H1 (cell line): ENCODE measurements at regions of chr6 and their contacts with region 1.

Region 1: DNA sequence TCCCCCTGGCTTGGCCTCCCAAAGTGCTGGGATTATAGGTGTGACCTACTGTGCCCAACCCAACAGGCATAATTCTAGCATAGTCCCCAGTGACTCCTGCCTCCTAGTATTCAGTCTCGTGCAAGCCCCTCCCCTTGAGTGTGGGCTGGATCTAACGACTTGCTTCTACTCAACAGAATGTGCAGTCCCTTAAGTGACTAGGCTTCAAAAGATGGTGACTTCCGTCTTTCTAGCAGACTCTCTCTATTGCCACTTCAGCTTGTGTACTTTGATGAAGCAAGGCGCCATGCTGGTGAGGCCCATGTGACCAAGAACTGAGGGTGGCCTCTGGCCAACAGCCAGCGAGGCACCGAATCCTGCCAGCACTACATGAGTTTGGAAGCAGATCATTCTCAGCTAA is 109.6 kb upstream of the TRAF3IP2 start:
- DNase-seq: no peak
- H3K4me3 ChIP-seq: no peak overlapping the region
- H3K27ac ChIP-seq: no peak overlapping the region
- H3K4me1 ChIP-seq: peaks cover 0 to 6% (median 3%) of the 10 kb centered on the region in 4 experiments; a peak in 5 of 7 replicates
- H3K27me3 ChIP-seq: no peaks in the 10 kb centered on the region
- CTCF ChIP-seq: no peak
- EP300 ChIP-seq: no peak
- POLR2A ChIP-seq: no peak
- RAD21 ChIP-seq: no peak

Region 2: GRCh38 chr6:111727802-111728201 is 12.5 kb after region 1 on chr6:
- CTCF ChIA-PET with region 1: interaction called, 27 read pairs
- POLR2A ChIA-PET with region 1: interaction called, 3 read pairs
- DNase-seq: no peak
- H3K4me3 ChIP-seq: no peak overlapping the region
- H3K27ac ChIP-seq: no peak overlapping the region
- H3K4me1 ChIP-seq: peaks cover 4 to 12% (median 6%) of the 10 kb centered on the region in 4 experiments
- H3K27me3 ChIP-seq: no peaks in the 10 kb centered on the region
- CTCF ChIP-seq: peak in 2 of 3 experiments; percentile 18 to 54; a peak in 2 of 4 replicates
- EP300 ChIP-seq: no peak
- POLR2A ChIP-seq: no peak
- RAD21 ChIP-seq: peak; percentile 16 to 41; a peak in 3 of 4 replicates

Region 3: DNA sequence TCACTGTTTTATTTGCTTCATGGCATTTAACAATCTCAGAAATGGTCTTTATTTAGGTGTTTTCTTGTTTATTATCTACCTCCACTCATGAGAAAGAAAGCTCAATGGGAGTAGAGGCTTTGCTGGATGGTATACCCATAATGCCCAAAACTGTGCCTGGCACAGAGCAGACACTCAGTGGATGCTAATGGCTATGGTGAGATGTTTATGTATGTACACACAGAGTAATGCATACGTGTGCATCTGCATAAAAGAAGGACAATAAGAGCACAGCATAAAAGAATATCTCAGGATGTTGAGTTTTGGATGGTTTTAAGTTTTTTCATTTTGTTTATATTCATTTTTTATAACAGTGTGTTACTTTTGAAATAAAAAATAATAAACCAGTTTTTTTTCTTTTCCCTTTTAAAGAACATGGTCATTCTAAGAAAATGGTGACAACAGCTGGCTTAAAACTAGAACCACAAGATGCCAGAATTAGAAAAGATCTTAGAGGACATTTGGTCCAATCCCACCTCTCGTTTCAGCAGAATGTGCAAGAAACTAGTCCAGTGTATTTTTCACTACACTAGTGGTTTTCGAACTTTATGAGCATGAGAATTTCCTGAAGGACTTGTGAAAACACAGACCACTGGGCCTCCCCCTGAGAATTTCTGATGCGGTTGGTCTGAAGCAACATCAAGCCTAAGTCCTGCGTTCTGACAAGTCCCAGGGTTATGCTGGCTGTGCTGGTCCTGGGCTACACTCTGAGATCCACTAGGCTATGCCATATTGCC is 26.0 kb after region 1 on chr6:
- CTCF ChIA-PET with region 1: no interaction called
- POLR2A ChIA-PET with region 1: no interaction called
- DNase-seq: no peak
- H3K4me3 ChIP-seq: no peak overlapping the region
- H3K27ac ChIP-seq: no peak overlapping the region
- H3K4me1 ChIP-seq: peaks cover 0 to 5% (median 0%) of the 10 kb centered on the region in 4 experiments; a peak in 3 of 7 replicates
- H3K27me3 ChIP-seq: no peaks in the 10 kb centered on the region
- CTCF ChIP-seq: no peak
- EP300 ChIP-seq: no peak
- POLR2A ChIP-seq: no peak
- RAD21 ChIP-seq: no peak